Activated CD8-positive, alpha-beta T cell treated with anti-CD3 and anti-CD28 coated beads for 36 hours (primary cell): ENCODE measurements at regions of chr1 and their contacts with region 1.

Region 1: DNA sequence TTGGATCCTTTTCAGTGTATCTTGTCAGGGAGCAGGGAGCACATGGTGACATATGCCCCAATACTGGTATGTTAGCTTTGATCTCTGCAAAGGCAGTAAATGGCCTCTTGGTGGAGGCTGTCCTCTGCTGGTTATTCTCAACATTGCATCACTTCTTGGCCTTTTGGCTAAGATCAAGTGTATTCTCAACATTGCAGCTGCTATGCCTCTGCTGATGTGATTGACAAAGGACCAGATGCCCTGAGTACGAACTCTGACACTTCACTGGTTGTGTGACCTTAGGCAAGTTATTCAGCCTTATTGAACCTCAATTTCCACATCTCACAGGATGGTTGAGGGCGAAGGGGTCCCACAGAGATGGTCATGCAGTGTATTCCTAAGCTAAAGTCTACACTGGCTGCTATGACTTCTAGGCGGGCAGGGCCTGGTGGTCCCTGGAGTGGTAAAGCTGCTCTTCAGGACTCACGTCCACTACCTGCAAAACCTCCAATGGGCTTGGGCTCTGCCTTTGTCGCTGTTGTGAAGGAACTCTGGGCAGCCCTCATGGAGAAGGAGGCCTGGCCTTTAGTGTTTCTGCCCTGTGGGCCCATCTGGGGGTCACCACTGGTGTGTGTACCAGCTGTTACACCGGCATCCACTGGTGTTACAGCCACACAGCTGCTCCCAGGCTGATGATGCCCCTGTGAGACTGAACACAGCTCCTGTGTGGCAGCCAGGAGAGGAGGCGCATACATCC is 64.8 kb downstream of the DNTTIP2 start:
- DNase-seq: peak; percentile 69
- ATAC-seq: peak; percentile 76
- H3K4me3 Mint-ChIP-seq: no peak overlapping the region
- H3K27ac Mint-ChIP-seq: no peak overlapping the region
- H3K4me1 Mint-ChIP-seq: peaks cover 17% of the 10 kb centered on the region
- H3K27me3 Mint-ChIP-seq: no peaks in the 10 kb centered on the region
- CTCF ChIP-seq: peak; percentile 84

Region 2: GRCh38 chr1:93616996-93617669 is 197.1 kb before region 1 on chr1:
- CTCF ChIA-PET with region 1: interaction called, 10 read pairs
- POLR2A ChIA-PET with region 1: interaction called, 3 read pairs
- intact Hi-C with region 1: no loop called
- DNase-seq: no peak
- ATAC-seq: no peak
- H3K4me3 Mint-ChIP-seq: no peak overlapping the region
- H3K27ac Mint-ChIP-seq: no peak overlapping the region
- H3K4me1 Mint-ChIP-seq: peaks cover 20% of the 10 kb centered on the region
- H3K27me3 Mint-ChIP-seq: no peaks in the 10 kb centered on the region
- CTCF ChIP-seq: no peak

Region 3: GRCh38 chr1:93638981-93639380 is 175.2 kb before region 1 on chr1:
- CTCF ChIA-PET with region 1: interaction called, 293 read pairs
- POLR2A ChIA-PET with region 1: no interaction called
- intact Hi-C with region 1: no loop called
- DNase-seq: no peak
- ATAC-seq: no peak
- H3K4me3 Mint-ChIP-seq: no peak overlapping the region
- H3K27ac Mint-ChIP-seq: no peak overlapping the region
- H3K4me1 Mint-ChIP-seq: peaks cover 13% of the 10 kb centered on the region
- H3K27me3 Mint-ChIP-seq: no peaks in the 10 kb centered on the region
- CTCF ChIP-seq: no peak

Region 4: GRCh38 chr1:93798301-93798700 is 15.9 kb before region 1 on chr1:
- CTCF ChIA-PET with region 1: interaction called, 11 read pairs
- POLR2A ChIA-PET with region 1: no interaction called
- intact Hi-C with region 1: no loop called
- DNase-seq: no peak
- ATAC-seq: no peak
- H3K4me3 Mint-ChIP-seq: no peak overlapping the region
- H3K27ac Mint-ChIP-seq: no peak overlapping the region
- H3K4me1 Mint-ChIP-seq: no peaks in the 10 kb centered on the region
- H3K27me3 Mint-ChIP-seq: peaks cover 8% of the 10 kb centered on the region
- CTCF ChIP-seq: no peak

Region 5: GRCh38 chr1:93846211-93846991 is 32.2 kb after region 1 on chr1:
- CTCF ChIA-PET with region 1: interaction called, 17 read pairs
- POLR2A ChIA-PET with region 1: no interaction called
- intact Hi-C with region 1: no loop called
- DNase-seq: peak; percentile 88
- ATAC-seq: peak; percentile 45
- H3K4me3 Mint-ChIP-seq: peak overlapping the region; percentile 80
- H3K27ac Mint-ChIP-seq: peak overlapping the region; percentile 92
- H3K4me1 Mint-ChIP-seq: peaks cover 18% of the 10 kb centered on the region
- H3K27me3 Mint-ChIP-seq: peaks cover 1% of the 10 kb centered on the region
- CTCF ChIP-seq: no peak